PC-9 (cell line): ENCODE measurements at regions of chr14 and their contacts with region 1.

Region 1: GRCh38 chr14:78902010-78902623 is 731.9 kb downstream of the NRXN3 start:
- DNase-seq: peak; percentile 46 to 55
- H3K4me3 ChIP-seq: no peak overlapping the region
- H3K27ac ChIP-seq: no peak overlapping the region
- H3K4me1 ChIP-seq: no peaks in the 10 kb centered on the region
- H3K27me3 ChIP-seq: peaks cover 11% of the 10 kb centered on the region
- CTCF ChIP-seq: peak; percentile 90

Region 2: DNA sequence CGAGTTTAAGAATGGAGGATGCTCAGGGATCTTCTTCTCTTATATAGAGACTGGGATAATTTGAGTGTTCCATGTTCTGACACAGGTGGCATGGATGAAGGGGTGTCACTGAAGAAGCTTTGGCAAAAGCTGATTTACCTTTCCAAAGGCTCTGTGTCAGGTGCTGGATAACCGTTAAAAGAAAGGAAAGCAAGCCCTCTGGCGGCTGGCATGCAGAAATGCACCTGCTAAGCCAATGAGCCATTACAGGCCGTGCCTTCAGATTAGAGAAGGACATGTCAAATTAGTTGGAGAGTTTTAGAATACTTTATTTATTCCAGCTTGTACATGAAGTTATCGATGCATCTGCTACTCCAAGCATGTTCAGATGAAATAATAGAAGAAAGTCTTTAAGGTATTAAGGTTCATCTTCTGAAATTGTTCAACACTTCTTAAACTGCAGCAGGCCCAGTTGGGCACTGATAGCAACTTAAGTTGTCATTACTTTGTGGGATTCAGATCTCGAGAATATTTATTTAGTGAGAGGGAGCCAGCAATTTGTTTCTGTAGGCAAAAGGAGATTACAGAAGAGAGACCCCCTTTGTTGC is 53.8 kb before region 1 on chr14:
- CTCF ChIA-PET with region 1: no interaction called
- POLR2A ChIA-PET with region 1: no interaction called
- intact Hi-C with region 1: loop called (anchors 5 kb)
- DNase-seq: peak; percentile 58 to 71
- H3K4me3 ChIP-seq: no peak overlapping the region
- H3K27ac ChIP-seq: no peak overlapping the region
- H3K4me1 ChIP-seq: no peaks in the 10 kb centered on the region
- H3K27me3 ChIP-seq: peaks cover 50% of the 10 kb centered on the region
- CTCF ChIP-seq: peak; percentile 100